ENCODE measurements at regions of chr3 and their contacts with region 1.

Region 1: GRCh38 chr3:15268033-15268631 is 62.1 kb downstream of the CAPN7 start:
- DNase-seq: peak; percentile 95
- H3K4me3 Mint-ChIP-seq: no peak overlapping the region
- H3K27ac Mint-ChIP-seq: no peak overlapping the region
- H3K4me1 Mint-ChIP-seq: peaks cover 45% of the 10 kb centered on the region
- H3K27me3 Mint-ChIP-seq: no peaks in the 10 kb centered on the region

Region 2: GRCh38 chr3:15108082-15108545 is 160.0 kb before region 1 on chr3:
- intact Hi-C with region 1: loop called (anchors 5 kb)
- DNase-seq: peak; percentile 92
- H3K4me3 Mint-ChIP-seq: no peak overlapping the region
- H3K27ac Mint-ChIP-seq: no peak overlapping the region
- H3K4me1 Mint-ChIP-seq: peaks cover 8% of the 10 kb centered on the region
- H3K27me3 Mint-ChIP-seq: peaks cover 16% of the 10 kb centered on the region

Region 3: DNA sequence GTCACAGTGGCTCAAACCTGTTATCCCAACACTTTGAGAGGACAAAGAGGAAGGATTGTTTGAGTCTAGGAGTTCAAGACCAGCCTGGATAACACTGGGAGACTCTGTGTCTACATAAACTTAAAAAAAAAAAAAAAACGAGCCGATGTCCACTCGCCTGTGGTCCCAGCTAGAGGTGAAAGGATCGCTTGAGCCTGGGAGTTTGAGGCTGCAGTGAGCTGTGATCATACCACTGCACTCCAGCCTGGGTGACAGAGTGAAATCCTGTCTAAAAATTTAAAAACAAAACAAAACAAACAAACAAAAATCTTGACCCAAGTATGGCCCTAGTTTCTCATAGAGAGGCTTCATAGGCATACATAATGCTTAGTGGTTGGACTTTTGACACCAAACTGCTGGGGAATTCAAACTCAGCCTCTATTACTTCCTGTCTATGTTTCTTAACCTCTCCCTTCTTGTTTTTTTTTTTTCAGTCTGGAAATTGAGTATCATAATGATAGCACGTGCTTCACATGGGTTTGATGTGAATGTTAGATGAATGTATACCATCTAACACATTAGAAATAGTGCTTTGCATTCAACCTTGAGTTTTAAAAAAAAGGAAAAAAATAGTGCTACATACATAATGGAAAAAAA is 108.5 kb before region 1 on chr3:
- intact Hi-C with region 1: no loop called
- DNase-seq: no peak
- H3K4me3 Mint-ChIP-seq: no peak overlapping the region
- H3K27ac Mint-ChIP-seq: no peak overlapping the region
- H3K4me1 Mint-ChIP-seq: peaks cover 5% of the 10 kb centered on the region
- H3K27me3 Mint-ChIP-seq: peaks cover 27% of the 10 kb centered on the region

Region 4: GRCh38 chr3:15332405-15333098 is 64.4 kb after region 1 on chr3 and contains the start of gene SH3BP5:
- intact Hi-C with region 1: loop called (anchors 1 kb)
- DNase-seq: peak; percentile 94
- H3K4me3 Mint-ChIP-seq: peak within 1 kb of the TSS; percentile 92
- H3K27ac Mint-ChIP-seq: peak within 1 kb of the TSS; percentile 89
- H3K4me1 Mint-ChIP-seq: peaks cover 48% of the 10 kb centered on the region
- H3K27me3 Mint-ChIP-seq: peaks cover 2% of the 10 kb centered on the region
- total RNA-seq, gene SH3BP5: 19.5 and 19.8 TPM in 2 replicates

Region 5: DNA sequence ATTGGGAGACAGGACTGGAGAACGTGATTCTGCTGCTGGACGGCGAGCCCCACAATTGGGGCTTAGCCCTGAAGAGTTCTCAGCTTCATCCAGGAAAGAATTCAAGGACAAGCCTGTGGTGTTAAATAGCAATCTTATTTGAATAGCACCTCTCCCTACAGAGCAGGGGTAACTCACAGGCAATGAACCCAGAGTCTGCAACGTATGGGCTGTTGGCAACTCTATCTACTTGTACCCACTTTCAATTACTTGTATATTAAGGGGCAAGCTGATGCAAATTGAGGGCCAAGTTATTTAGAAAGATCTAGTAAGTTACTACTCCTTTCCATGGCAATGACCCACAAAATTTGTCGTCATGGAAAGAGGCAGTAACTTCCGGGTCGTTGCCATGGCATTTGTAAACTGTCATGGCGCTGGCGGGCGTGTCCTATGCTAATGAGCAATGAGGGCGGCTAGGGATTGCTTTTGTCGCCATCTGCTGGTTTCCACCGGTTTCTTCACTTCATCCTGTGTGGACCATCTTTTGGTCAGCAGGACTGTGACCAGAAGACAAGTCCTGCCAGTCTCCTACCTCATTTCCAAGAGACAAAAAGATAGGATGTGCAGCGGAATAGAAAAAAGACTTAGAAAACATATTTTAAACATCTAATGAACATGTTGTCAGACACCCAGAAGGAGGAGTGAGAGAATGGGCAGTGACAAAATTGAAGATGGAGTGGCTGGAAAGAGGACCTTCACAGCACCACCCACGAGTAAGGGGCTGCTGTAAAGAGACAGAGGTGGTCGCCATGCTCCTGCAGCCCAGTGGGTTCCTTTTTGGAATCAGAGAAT is 110.0 kb after region 1 on chr3:
- intact Hi-C with region 1: loop called (anchors 1 kb)
- DNase-seq: peak; percentile 99
- H3K4me3 Mint-ChIP-seq: no peak overlapping the region
- H3K27ac Mint-ChIP-seq: peak overlapping the region; percentile 86
- H3K4me1 Mint-ChIP-seq: peaks cover 14% of the 10 kb centered on the region
- H3K27me3 Mint-ChIP-seq: peaks cover 3% of the 10 kb centered on the region

Region 6: GRCh38 chr3:15535732-15536131 is 267.6 kb after region 1 on chr3:
- intact Hi-C with region 1: loop called (anchors 5 kb)
- DNase-seq: peak; percentile 86
- H3K4me3 Mint-ChIP-seq: peak overlapping the region; percentile 76
- H3K27ac Mint-ChIP-seq: peak overlapping the region; percentile 91
- H3K4me1 Mint-ChIP-seq: peaks cover 54% of the 10 kb centered on the region
- H3K27me3 Mint-ChIP-seq: no peaks in the 10 kb centered on the region

Measured in activated CD4-positive, alpha-beta T cell treated with anti-CD3 and anti-CD28 coated beads, Interleukin-2, amount 10 ng/mL, durations not matched to agents 24 days and 14 days (primary cell).